ENCODE measurements at regions of chr3 and their contacts with region 1.

Region 1: DNA sequence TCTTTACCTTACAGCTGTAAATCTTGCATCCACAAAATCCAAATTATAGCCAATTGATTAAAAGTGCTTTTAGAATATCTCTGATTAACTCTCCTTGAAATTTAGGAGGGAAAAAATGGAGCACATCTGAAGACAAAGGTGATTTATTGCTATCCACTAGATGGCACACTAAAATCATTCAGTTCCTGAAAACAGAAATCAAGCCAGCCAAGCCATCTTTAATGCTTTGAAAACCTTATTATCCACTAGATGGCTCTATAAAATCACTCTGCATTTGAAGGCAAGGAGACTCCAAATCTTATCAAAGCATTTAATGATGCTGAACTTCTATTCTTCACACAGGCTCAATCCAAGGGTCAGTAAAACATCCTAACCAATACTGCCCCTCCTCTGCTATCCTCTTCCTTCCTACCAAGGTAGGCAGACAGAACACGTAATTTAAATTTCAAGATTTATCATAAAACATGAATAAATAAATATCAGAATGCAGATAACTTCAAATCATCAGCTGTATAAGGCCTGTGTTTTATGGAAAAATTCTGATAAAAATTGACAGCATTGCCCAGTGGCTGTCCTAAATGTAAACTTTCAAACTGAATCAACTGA is 48.4 kb downstream of the GOLIM4 start:
- ATAC-seq: peak; percentile 36 to 80 (median 58)
- H3K4me3 ChIP-seq: no peak overlapping the region
- H3K27ac ChIP-seq: no peak overlapping the region
- H3K4me1 ChIP-seq: peaks cover 16 to 18% of the 10 kb centered on the region in 2 donors

Region 2: DNA sequence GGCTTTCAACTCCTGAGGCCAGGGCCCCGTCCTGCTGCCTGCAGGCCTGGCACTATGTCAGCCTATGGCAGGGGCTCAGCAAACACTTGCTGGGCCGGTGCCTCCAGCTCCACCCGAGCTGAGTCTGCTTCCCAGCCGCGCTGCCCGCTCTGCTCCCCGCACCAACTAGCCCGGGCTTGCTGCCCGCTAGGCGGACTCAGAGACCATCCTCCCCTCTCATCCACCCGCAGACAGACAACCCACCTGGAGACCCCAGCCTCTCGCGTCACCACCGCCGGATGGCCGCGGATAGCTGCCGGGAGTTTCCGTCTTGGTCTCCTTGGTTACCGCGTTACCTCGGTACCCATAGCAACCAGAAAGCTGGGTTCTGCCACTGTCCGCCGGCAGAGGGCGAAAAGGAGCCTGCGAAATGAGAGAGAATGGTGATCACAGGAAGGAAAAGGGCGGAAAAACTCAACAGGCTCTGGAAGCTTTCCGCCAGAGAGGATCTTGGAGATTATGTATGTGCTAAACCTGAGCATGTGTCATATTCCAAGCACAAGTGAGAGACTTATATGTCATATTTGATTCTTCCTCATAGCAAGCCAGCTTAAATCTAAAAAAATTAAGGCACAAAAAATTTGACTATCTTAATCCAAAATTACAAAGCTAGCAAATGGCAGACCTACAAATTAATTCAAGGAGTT is 667.1 kb before region 1 on chr3 and contains the start of gene ZBBX:
- in situ Hi-C with region 1: loop called in 1 of 9 experiments (anchors 25 kb)
- ATAC-seq: peak; percentile 97 to 100 (median 98)
- H3K4me3 ChIP-seq: peak within 1 kb of the TSS; percentile 35 to 55 (median 38)
- H3K27ac ChIP-seq: no peak within 1 kb of the TSS
- H3K4me1 ChIP-seq: no peaks in the 10 kb centered on the region
- total RNA-seq, gene ZBBX: 0.10 to 32.7 (median 3.5) TPM

Region 3: GRCh38 chr3:167406875-167407492 is 640.3 kb before region 1 on chr3:
- in situ Hi-C with region 1: loop called in 1 of 9 experiments (anchors 25 kb)
- ATAC-seq: peak; percentile 73 to 100 (median 94)
- H3K4me3 ChIP-seq: no peak overlapping the region
- H3K27ac ChIP-seq: no peak overlapping the region
- H3K4me1 ChIP-seq: no peaks in the 10 kb centered on the region

Region 4: DNA sequence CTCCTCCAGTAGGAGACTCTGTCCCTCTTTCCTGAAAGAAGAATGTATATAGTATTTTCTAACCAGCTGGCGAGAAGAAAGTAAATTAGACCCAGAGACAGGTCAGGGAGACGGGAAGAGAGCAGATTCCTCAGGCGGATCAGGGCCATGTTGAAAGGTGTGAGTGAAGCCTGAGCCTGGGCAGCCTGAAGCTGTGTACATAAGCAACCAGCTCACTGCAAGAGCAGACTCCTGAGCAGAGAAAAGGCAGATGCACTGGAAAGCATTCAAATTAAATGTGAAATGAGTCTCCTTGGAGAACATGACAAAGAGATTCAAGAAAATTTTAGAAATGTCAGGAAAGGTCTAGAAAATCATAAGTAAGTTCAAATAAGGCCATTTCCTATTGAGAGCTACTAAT is 117.3 kb before region 1 on chr3:
- in situ Hi-C with region 1: loop called in 1 of 9 experiments (anchors 10 kb)
- ATAC-seq: peak in 1 of 8 experiments; percentile 67
- H3K4me3 ChIP-seq: no peak overlapping the region
- H3K27ac ChIP-seq: no peak overlapping the region
- H3K4me1 ChIP-seq: no peaks in the 10 kb centered on the region

Region 5: GRCh38 chr3:168156479-168156878 is 109.2 kb after region 1 on chr3:
- in situ Hi-C with region 1: loop called in 6 of 9 experiments (anchors 10 to 25 kb)
- ATAC-seq: no peak
- H3K4me3 ChIP-seq: no peak overlapping the region
- H3K27ac ChIP-seq: no peak overlapping the region
- H3K4me1 ChIP-seq: no peaks in the 10 kb centered on the region

Region 6: GRCh38 chr3:168165390-168166269 is 118.3 kb after region 1 on chr3:
- in situ Hi-C with region 1: loop called in 5 of 9 experiments (anchors 10 to 25 kb)
- ATAC-seq: peak in 5 of 8 experiments; percentile 45 to 85 (median 80)
- H3K4me3 ChIP-seq: no peak overlapping the region
- H3K27ac ChIP-seq: no peak overlapping the region
- H3K4me1 ChIP-seq: no peaks in the 10 kb centered on the region

Region 7: GRCh38 chr3:168693870-168694269 is 646.6 kb after region 1 on chr3:
- in situ Hi-C with region 1: no loop called
- ATAC-seq: no peak
- H3K4me3 ChIP-seq: no peak overlapping the region
- H3K27ac ChIP-seq: no peak overlapping the region
- H3K4me1 ChIP-seq: peaks cover 0 to 18% of the 10 kb centered on the region in 2 donors

Measured in motor neuron (in vitro differentiated cells).